ENCODE measurements at regions of chr11 and their contacts with region 1.

Region 1: GRCh38 chr11:113875234-113876073 is at the start of gene USP28:
- DNase-seq: peak; percentile 96 to 99 (median 98)
- H3K4me3 ChIP-seq: peak within 1 kb of the TSS; percentile 43 to 97 (median 84)
- H3K27ac ChIP-seq: peak within 1 kb of the TSS; percentile 86 to 100 (median 96)
- H3K27me3 ChIP-seq: no peaks in the 10 kb centered on the region
- CTCF ChIP-seq: peak in 22 of 56 donors; percentile 3 to 44 (median 16)
- total RNA-seq, gene USP28: 20.2 to 57.1 (median 38.9) TPM

Region 2: GRCh38 chr11:113314389-113315301 is 560.8 kb before region 1 on chr11 and contains the start of gene TTC12:
- intact Hi-C with region 1: loop called in 1 of 2 experiments (anchors 10 kb)
- DNase-seq: peak; percentile 88 to 95 (median 92)
- H3K4me3 ChIP-seq: peak within 1 kb of the TSS; percentile 40 to 92 (median 76)
- H3K27ac ChIP-seq: peak within 1 kb of the TSS in 56 of 59 donors; percentile 20 to 92 (median 81)
- H3K27me3 ChIP-seq: no peaks in the 10 kb centered on the region
- CTCF ChIP-seq: peak in 28 of 56 donors; percentile 5 to 61 (median 30)
- total RNA-seq, gene TTC12: 4.3 to 31.8 (median 14.8) TPM

Region 3: DNA sequence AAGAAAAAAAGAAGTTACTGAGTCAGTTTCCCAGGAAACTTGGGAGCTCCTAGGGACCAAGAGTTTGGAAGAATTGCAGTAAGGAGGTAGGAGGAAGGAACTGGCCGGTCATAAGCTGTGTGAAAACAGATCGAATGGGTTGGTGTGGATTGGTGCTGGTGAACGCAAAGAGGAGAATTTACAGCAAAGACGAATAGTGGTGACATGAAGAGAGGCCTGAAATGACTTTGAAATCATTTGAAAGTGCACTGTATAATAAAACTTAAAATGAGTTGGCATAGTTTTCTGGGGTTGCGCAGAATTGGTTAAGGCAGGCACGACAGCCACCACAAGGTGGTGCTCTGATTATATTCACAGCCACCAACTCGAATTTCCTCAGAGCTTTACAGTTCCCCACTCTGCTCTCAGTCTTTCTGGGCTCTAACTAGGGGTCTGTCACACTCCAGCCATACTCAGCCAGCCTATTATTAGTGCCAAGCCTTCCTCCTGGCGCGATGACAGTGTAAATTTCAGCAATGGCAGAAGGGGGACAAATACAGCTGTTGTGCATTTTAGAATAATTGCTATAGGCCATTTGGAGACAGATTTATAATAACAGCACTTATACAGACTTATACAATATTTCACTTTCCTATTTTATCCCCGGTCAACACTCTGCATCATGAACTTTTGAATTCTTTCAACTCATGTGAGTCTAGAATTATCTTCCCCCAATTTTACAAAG is 20.9 kb after region 1 on chr11:
- intact Hi-C with region 1: no loop called
- DNase-seq: peak in 7 of 10 donors; percentile 36 to 67 (median 45)
- H3K4me3 ChIP-seq: no peak overlapping the region
- H3K27ac ChIP-seq: peak overlapping the region in 28 of 59 donors; percentile 3 to 75 (median 46)
- H3K27me3 ChIP-seq: no peaks in the 10 kb centered on the region
- CTCF ChIP-seq: peak; percentile 59 to 90 (median 80)

Region 4: DNA sequence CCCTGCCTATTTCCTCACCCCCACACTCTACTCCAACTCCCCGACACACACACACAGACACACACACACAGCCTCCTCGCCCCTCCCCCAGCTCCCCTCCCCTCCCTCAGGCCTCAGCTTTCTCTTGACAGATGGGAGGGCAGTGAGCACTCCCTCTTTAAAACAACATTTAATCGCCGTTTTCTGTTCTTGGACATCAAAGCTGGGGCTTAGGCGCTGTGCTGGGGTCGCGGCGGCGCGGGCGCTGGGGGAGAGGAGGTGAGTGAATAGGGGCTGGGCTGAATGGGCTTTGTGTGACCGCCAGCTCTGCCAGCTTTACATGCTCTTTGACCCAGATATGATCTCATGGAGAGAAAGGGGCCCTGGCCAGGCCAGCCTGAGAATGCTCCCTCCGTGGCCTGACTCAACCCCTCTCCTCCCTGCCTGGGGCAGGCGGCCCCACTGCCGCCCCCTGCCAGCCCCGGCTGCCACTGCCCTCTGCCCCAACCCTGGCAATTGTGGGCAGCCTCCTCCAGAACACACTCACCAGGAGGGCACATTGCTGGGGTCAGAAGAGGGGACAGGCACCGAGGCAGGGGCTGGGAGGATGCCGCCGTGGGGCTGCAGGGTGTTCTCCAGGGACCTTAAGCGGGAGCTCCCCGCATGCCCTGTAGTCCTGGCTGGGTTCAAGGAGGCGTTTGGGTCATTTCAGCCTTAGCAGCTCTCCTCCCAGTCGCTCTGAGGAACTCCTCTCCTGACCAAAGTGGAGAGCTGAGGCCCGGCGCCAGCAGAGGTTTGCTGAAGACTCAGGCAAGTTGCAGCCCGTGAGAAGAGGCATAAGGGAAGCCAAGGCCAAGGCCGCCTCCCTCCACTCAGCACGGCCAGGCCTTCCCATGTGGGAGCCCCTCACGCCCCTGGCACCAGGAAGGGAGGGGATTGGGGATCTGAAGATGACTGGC is 382.4 kb after region 1 on chr11:
- intact Hi-C with region 1: loop called (anchors 5 kb)
- DNase-seq: peak in 4 of 10 donors; percentile 41 to 54 (median 48)
- H3K4me3 ChIP-seq: peak overlapping the region in 8 of 59 donors; percentile 5 to 31 (median 14)
- H3K27ac ChIP-seq: peak overlapping the region in 58 of 59 donors; percentile 15 to 88 (median 74)
- H3K27me3 ChIP-seq: no peaks in the 10 kb centered on the region
- CTCF ChIP-seq: peak in 31 of 56 donors; percentile 8 to 50 (median 27)

Measured in dorsolateral prefrontal cortex (tissue), 120 donors.